GM12878 (cell line): ENCODE measurements at regions of chr1 and their contacts with region 1.

Region 1: GRCh38 chr1:154198756-154199562 is 7.1 kb upstream of the TPM3 start:
- DNase-seq: no peak
- ATAC-seq: peak; percentile 87
- H3K4me3 ChIP-seq: no peak overlapping the region
- H3K27ac ChIP-seq: no peak overlapping the region
- H3K4me1 ChIP-seq: no peaks in the 10 kb centered on the region
- H3K27me3 ChIP-seq: no peaks in the 10 kb centered on the region; a peak in 1 of 4 replicates
- CTCF ChIP-seq: peak; percentile 61 to 71 (median 67)
- EP300 ChIP-seq: no peak
- POLR2A ChIP-seq: no peak
- RAD21 ChIP-seq: peak; percentile 76

Region 2: GRCh38 chr1:154091706-154092105 is 107.3 kb before region 1 on chr1:
- CTCF ChIA-PET with region 1: no interaction called
- POLR2A ChIA-PET with region 1: no interaction called
- RAD21 ChIA-PET with region 1: no interaction called
- SMC1A ChIA-PET with region 1: no interaction called
- in situ Hi-C with region 1: no loop called
- intact Hi-C with region 1: no loop called
- DNase-seq: no peak
- ATAC-seq: no peak
- H3K4me3 ChIP-seq: no peak overlapping the region
- H3K27ac ChIP-seq: no peak overlapping the region
- H3K4me1 ChIP-seq: no peaks in the 10 kb centered on the region
- H3K27me3 ChIP-seq: no peaks in the 10 kb centered on the region; a peak in 1 of 4 replicates
- CTCF ChIP-seq: no peak
- EP300 ChIP-seq: no peak
- POLR2A ChIP-seq: no peak
- RAD21 ChIP-seq: no peak

Region 3: GRCh38 chr1:154151311-154151710 is 47.6 kb before region 1 on chr1:
- CTCF ChIA-PET with region 1: no interaction called
- POLR2A ChIA-PET with region 1: no interaction called
- RAD21 ChIA-PET with region 1: no interaction called
- SMC1A ChIA-PET with region 1: no interaction called
- in situ Hi-C with region 1: no loop called
- intact Hi-C with region 1: no loop called
- DNase-seq: no peak
- ATAC-seq: no peak
- H3K4me3 ChIP-seq: no peak overlapping the region
- H3K27ac ChIP-seq: no peak overlapping the region
- H3K4me1 ChIP-seq: no peaks in the 10 kb centered on the region; the same call in 1 of the 2 replicates
- H3K27me3 ChIP-seq: no peaks in the 10 kb centered on the region
- CTCF ChIP-seq: no peak
- EP300 ChIP-seq: no peak
- POLR2A ChIP-seq: no peak
- RAD21 ChIP-seq: no peak

Region 4: GRCh38 chr1:154220071-154220969 is 21.4 kb after region 1 on chr1 and contains the start of gene UBAP2L:
- CTCF ChIA-PET with region 1: interaction called, 29 read pairs
- POLR2A ChIA-PET with region 1: interaction called, 6 read pairs
- RAD21 ChIA-PET with region 1: interaction called, 16 read pairs
- SMC1A ChIA-PET with region 1: interaction called, 8 read pairs
- in situ Hi-C with region 1: no loop called
- intact Hi-C with region 1: no loop called
- DNase-seq: peak; percentile 98
- ATAC-seq: peak; percentile 90
- H3K4me3 ChIP-seq: peak within 1 kb of the TSS; percentile 99
- H3K27ac ChIP-seq: peak within 1 kb of the TSS; percentile 99
- H3K4me1 ChIP-seq: peaks cover 21% of the 10 kb centered on the region
- H3K27me3 ChIP-seq: no peaks in the 10 kb centered on the region
- CTCF ChIP-seq: no peak
- EP300 ChIP-seq: no peak
- POLR2A ChIP-seq: peak; percentile 97
- RAD21 ChIP-seq: no peak
- polyA plus RNA-seq, gene UBAP2L: 49.9 to 53.3 TPM